BJ (cell line): ENCODE measurements at regions of chr3 and their contacts with region 1.

Region 1: DNA sequence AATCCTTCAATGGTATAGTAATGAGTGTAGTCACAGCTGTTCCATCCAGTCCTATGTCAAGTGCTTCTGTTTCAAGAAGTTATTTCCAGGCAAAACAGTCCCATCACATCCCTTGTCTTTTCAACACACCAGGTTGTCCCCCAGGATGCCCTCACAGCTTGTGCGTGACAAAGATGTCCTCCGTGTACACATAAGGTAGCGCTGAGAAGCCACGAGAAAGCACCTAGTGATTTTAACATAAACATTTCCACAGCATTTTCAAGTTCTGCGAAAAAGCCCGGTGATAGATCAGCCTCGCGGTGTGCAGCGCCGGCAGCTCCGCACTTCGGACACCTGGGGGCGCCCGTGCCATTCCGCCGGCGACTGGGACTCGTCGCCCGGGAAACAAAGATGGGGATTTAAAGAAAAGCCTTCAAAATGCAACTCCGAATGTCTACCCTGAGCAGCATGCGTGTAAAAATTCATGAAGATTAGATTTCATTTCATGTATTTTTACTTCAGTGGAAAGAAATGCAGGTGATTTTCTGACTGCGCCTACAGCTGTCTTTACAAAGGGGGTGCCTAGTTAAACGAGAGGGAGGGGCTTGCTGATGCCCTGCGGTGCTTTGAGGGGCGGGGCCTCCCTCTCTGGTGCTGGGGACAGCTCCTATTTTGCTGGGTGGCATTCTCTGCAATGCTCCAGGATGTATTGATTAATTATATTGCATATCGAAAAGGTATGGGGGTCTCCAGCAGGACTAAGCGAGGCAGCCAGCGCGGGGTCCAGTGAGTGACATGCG is 49.9 kb downstream of the KY start:
- DNase-seq: no peak
- H3K4me3 ChIP-seq: no peak overlapping the region
- H3K27me3 ChIP-seq: peaks cover 2% of the 10 kb centered on the region; the same call in 1 of the 2 replicates
- CTCF ChIP-seq: peak; percentile 99

Region 2: DNA sequence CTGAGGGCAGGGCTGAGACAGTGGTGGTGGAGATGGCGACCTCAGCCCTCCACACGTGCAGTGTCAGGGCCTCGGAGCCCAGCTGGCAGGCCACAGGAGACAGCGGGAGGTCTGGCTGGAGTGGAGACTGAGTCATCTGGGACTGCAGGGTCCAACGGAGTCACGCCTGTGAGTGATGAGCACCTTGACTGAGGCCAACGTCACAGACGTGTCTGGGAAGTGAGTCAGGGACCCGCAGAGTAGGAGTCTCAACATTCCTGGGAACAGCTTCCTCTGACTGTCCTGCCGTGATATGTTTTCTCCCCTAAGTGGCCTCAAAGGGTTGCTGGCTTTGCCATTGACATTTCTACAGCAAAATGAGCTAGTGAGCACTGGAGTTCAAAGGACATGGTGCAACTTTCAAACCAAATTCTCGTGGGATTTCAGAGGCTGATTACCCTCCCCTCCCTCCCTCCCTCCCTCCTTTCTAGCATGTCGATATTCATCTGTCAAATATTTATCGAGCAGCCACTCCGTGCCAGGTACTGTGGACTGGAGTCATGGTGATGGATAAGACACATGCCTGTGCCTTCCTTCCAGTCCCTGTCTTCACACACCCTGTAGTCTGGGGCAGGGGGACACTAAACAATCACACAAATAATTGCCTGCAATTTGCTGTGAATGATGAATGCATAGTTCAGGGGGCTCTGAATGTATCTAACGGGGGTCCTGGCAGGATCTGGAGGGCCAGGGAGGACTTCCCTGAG is 173.3 kb before region 1 on chr3:
- CTCF ChIA-PET with region 1: no interaction called
- POLR2A ChIA-PET with region 1: no interaction called
- DNase-seq: peak; percentile 99
- H3K4me3 ChIP-seq: no peak overlapping the region
- H3K27me3 ChIP-seq: no peaks in the 10 kb centered on the region
- CTCF ChIP-seq: no peak

Region 3: DNA sequence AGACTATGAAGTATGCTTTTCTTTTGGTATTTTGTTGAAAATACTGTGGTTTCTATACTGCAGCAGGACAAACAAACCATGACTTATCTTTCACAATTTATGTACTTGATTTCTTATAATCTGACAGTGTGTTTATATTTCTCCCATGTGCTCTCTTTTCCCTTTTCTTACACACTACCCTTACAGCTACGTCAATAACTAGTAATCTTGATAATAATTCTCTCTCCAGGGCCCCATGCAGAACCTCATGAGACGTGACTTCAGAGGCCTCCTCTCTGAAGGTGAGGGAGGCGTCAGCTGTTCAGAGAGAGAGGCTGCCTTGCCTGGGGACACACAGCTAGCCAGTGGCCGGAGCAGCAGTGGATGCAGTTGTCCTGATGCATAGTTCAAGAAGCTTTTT is 14.1 kb after region 1 on chr3:
- CTCF ChIA-PET with region 1: interaction called, 24 read pairs
- POLR2A ChIA-PET with region 1: no interaction called
- DNase-seq: no peak
- H3K4me3 ChIP-seq: no peak overlapping the region
- H3K27me3 ChIP-seq: no peaks in the 10 kb centered on the region; the same call in 1 of the 2 replicates
- CTCF ChIP-seq: no peak

Region 4: DNA sequence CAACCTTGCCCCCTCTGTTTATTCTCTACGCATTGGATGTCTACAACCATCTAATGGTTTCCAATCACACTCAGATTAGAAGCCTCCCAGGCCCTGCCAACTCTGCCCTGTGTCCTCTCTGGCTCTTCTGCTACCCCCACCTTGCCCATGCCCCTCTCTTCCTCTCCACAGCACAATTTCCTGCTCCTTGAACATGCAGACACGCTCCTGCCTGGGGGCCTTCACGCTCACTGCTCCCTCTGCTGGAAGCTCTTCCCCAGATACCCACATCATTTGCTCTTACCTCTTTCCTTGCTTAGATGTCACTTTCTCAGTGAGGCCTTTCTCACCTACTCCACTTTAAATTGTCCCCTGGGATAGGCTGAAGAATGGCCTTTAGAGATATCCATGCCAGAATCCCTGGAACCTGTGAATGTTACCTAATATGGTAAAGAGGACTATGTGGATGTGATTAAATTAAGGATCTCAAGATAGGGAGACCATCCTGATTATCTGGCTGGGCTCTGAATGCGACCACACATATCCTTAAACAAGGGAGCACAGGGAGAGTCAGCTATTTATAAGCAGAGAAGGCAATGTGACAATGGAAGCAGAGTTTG is 40.1 kb after region 1 on chr3:
- CTCF ChIA-PET with region 1: interaction called, 28 read pairs
- POLR2A ChIA-PET with region 1: no interaction called
- DNase-seq: no peak
- H3K4me3 ChIP-seq: no peak overlapping the region
- H3K27me3 ChIP-seq: no peaks in the 10 kb centered on the region; the same call in none of the 2 replicates
- CTCF ChIP-seq: peak; percentile 71

Region 5: DNA sequence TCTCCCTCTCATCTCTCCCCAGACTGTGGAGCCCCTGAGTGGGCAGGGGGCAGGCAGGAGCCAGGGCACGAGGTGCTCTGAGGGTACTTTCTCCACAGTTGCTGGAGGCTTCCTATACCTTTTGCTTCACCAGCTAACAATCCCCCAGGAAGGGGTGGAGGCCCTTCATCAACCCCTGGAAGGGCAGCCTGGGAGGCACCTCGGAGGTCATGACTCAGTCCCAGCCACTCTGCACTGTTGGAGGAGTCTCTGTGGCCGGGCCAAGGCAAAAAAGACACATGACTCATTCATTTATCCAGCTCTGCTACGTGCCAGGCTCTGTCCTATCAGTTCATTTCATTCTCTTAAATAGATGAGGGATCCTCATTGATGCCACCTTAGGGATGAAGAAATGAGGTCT is 65.6 kb after region 1 on chr3:
- CTCF ChIA-PET with region 1: no interaction called
- POLR2A ChIA-PET with region 1: no interaction called
- DNase-seq: no peak
- H3K4me3 ChIP-seq: no peak overlapping the region
- H3K27me3 ChIP-seq: no peaks in the 10 kb centered on the region
- CTCF ChIP-seq: no peak

Region 6: DNA sequence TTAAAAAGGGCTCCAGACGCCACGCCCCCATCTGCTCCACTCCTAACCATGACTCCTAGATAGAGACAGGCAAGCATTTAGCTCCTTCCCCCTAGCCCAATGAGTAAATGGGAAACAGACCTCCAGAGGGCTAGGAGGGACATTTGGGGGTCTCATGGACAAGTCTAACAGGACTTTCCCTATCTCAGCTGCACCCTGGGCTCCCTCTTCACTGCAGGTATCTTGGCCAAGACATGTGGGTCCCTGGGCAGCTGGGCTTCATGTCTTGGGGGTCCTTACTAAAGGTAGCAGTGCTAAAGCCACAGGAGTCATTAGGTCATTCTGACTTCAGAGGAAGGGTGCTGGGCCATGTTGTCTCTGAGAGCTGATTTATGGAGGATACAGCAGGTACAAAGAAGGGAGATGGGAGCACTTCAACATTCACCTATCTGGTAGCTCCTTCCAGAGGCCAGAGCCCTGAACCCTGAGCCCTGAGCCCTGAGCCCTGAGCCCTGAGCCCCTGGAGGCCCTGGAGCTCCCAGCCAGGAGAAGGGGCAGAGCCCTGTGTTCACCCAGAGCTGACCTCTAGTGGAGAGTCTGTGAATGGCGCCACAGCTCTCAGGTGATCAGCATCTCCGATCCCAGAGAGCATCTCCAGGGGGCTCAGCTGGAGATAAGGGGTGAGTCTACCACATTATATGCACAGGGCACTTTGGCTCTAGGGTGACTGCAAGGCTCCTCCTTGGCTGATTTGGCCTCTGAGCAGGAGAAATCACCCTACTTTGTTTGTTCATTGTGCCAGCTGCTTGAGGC is 154.1 kb after region 1 on chr3:
- CTCF ChIA-PET with region 1: interaction called, 76 read pairs
- POLR2A ChIA-PET with region 1: no interaction called
- DNase-seq: no peak
- H3K4me3 ChIP-seq: no peak overlapping the region
- H3K27me3 ChIP-seq: 0 out of 2 replicates have a peak, but pooled peaks cover 2% of the 10 kb centered on the region
- CTCF ChIP-seq: peak; percentile 86

Region 7: GRCh38 chr3:135895106-135895733 is 1294.3 kb after region 1 on chr3:
- CTCF ChIA-PET with region 1: interaction called, 10 read pairs
- POLR2A ChIA-PET with region 1: no interaction called
- DNase-seq: no peak
- H3K4me3 ChIP-seq: no peak overlapping the region
- H3K27me3 ChIP-seq: no peaks in the 10 kb centered on the region
- CTCF ChIP-seq: peak; percentile 89